Activated naive CD4-positive, alpha-beta T cell treated with anti-CD3 and anti-CD28 coated beads, Interleukin-2, amount 10 ng/mL, durations not matched to agents 7 days and 5 days (primary cell): ENCODE measurements at regions of chr12 and their contacts with region 1.

Region 1: GRCh38 chr12:80269803-80270552 is 170.6 kb downstream of the OTOGL start:
- DNase-seq: no peak
- H3K4me3 Mint-ChIP-seq: no peak overlapping the region
- H3K27ac Mint-ChIP-seq: no peak overlapping the region
- H3K4me1 Mint-ChIP-seq: no peaks in the 10 kb centered on the region
- H3K27me3 Mint-ChIP-seq: no peaks in the 10 kb centered on the region

Region 2: GRCh38 chr12:79547735-79548609 is 722.0 kb before region 1 on chr12:
- CTCF ChIA-PET with region 1: interaction called, 10 read pairs
- DNase-seq: peak; percentile 42
- H3K4me3 Mint-ChIP-seq: no peak overlapping the region
- H3K27ac Mint-ChIP-seq: no peak overlapping the region
- H3K4me1 Mint-ChIP-seq: no peaks in the 10 kb centered on the region
- H3K27me3 Mint-ChIP-seq: peaks cover 5% of the 10 kb centered on the region

Region 3: GRCh38 chr12:80299976-80300375 is 30.0 kb after region 1 on chr12:
- CTCF ChIA-PET with region 1: no interaction called
- DNase-seq: no peak
- H3K4me3 Mint-ChIP-seq: no peak overlapping the region
- H3K27ac Mint-ChIP-seq: no peak overlapping the region
- H3K4me1 Mint-ChIP-seq: no peaks in the 10 kb centered on the region
- H3K27me3 Mint-ChIP-seq: no peaks in the 10 kb centered on the region